GM10248 (cell line): ENCODE measurements at regions of chr2 and their contacts with region 1.

Region 1: GRCh38 chr2:48946449-48947048 is 191.0 kb upstream of the LHCGR start:
- DNase-seq: peak; percentile 58
- CTCF ChIP-seq: peak; percentile 69

Region 2: GRCh38 chr2:48961009-48961408 is 14.5 kb after region 1 on chr2:
- CTCF ChIA-PET with region 1: interaction called, 11 read pairs
- POLR2A ChIA-PET with region 1: no interaction called
- DNase-seq: no peak
- CTCF ChIP-seq: no peak

Region 3: GRCh38 chr2:50143822-50144575 is 1197.5 kb after region 1 on chr2:
- CTCF ChIA-PET with region 1: interaction called, 16 read pairs
- POLR2A ChIA-PET with region 1: no interaction called
- DNase-seq: peak; percentile 26
- CTCF ChIP-seq: peak; percentile 57

Region 4: GRCh38 chr2:50401772-50402653 is 1455.5 kb after region 1 on chr2:
- CTCF ChIA-PET with region 1: interaction called, 46 read pairs
- POLR2A ChIA-PET with region 1: no interaction called
- DNase-seq: peak; percentile 17
- CTCF ChIP-seq: peak; percentile 70

Region 5: DNA sequence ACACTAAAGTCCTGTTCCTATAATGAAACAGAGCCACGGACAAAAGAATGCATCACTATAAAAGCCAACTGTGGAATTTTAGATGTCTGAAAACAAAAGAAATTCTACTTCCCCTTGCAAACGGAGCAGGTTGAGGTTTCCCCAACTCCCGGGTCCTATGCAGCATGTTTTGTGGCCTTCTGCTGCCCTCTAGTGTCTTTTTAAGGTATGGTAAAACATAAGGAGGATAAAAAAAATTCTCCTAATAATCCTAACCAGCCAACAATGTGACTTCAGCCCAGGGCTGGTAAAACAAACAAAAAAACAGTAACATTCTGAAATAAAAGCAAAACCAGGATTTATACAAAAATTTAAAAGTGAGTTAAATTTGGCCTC is 1545.9 kb after region 1 on chr2:
- CTCF ChIA-PET with region 1: interaction called, 15 read pairs
- POLR2A ChIA-PET with region 1: no interaction called
- DNase-seq: peak; percentile 55
- CTCF ChIP-seq: peak; percentile 68